ENCODE measurements at regions of chr18 and their contacts with region 1.

Region 1: DNA sequence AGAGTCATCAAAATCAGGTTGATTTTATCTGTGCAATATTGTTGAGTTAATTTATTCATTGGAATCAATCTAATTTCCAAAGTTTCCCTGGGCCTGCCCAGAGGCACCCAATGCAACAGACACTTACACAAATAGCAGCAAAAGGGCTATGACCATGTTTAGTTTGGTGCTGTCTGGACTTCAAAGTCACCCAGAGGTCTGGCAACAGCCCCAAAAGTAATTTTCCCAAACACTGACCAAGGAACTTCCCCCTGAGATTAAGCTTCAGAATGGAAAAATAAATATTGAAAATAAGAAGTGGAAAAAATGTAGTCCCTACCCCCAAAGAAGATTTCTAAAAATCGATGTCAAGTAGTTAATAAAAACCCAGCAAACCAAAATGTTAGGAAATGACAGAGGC is 70.9 kb upstream of the RNF152 start:
- DNase-seq: peak in 1 of 2 donors; percentile 51
- ATAC-seq: peak in 5 of 8 donors; percentile 49 to 79 (median 71)
- H3K4me3 ChIP-seq: no peak overlapping the region
- H3K27ac ChIP-seq: peak overlapping the region in 3 of 10 donors; percentile 27 to 55 (median 51)
- H3K4me1 ChIP-seq: peaks cover 0 to 23% (median 2%) of the 10 kb centered on the region in 9 donors
- H3K27me3 ChIP-seq: no peaks in the 10 kb centered on the region
- CTCF ChIP-seq: no peak

Region 2: GRCh38 chr18:61350578-61350977 is 613.1 kb before region 1 on chr18:
- intact Hi-C with region 1: no loop called
- DNase-seq: no peak
- ATAC-seq: no peak
- H3K4me3 ChIP-seq: no peak overlapping the region
- H3K27ac ChIP-seq: no peak overlapping the region
- H3K4me1 ChIP-seq: no peaks in the 10 kb centered on the region
- H3K27me3 ChIP-seq: no peaks in the 10 kb centered on the region
- CTCF ChIP-seq: no peak

Region 3: GRCh38 chr18:61551586-61551985 is 412.1 kb before region 1 on chr18:
- intact Hi-C with region 1: no loop called
- DNase-seq: peak in 1 of 2 donors; percentile 77
- ATAC-seq: peak; percentile 65 to 92 (median 74)
- H3K4me3 ChIP-seq: no peak overlapping the region
- H3K27ac ChIP-seq: peak overlapping the region in 3 of 10 donors; percentile 16 to 36 (median 17)
- H3K4me1 ChIP-seq: peaks cover 0 to 11% (median 4%) of the 10 kb centered on the region in 9 donors
- H3K27me3 ChIP-seq: no peaks in the 10 kb centered on the region
- CTCF ChIP-seq: peak; percentile 73 to 90 (median 88)

Region 4: DNA sequence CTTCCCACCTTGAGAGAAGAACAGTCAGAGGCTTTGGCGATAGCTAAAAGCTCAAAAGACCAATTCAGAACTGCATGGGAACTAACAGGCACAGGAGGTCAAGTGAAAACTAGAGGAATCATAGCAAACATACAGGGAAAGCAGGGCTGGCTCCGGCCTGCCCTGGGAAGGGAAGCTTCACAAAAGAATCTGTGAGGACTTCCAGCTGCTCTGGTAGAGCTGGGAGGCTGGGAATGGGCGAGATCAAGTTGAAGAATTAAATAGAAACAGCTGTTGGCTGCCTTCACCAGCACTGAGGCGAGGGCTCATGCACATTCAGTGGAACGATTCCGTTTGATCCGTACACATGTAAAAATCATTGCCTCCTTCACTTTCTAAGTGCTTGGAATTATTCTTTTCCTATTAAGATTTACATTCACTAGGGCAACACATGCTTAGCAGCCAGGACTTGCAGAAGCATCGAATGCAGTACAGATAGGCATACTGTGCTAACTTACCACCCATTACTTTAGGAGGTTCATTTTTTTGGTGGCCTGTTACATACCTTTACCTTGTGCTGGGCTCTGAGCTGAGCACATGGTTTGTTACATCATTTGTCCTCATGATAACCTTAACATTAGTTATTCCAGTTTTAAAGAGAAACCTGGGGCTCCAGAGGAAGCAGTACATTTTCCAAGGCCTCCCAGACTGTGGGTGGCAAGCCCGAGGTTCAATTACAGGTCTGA is 54.5 kb after region 1 on chr18:
- intact Hi-C with region 1: loop called in 1 of 10 experiments (anchors 5 kb)
- DNase-seq: peak; percentile 58 to 62
- ATAC-seq: peak; percentile 85 to 97 (median 92)
- H3K4me3 ChIP-seq: no peak overlapping the region
- H3K27ac ChIP-seq: peak overlapping the region; percentile 7 to 66 (median 50)
- H3K4me1 ChIP-seq: peaks cover 0 to 25% (median 11%) of the 10 kb centered on the region in 9 donors
- H3K27me3 ChIP-seq: no peaks in the 10 kb centered on the region
- CTCF ChIP-seq: no peak

Measured in heart right ventricle (tissue), 16 donors.